Left cardiac atrium (tissue), 4 donors: ENCODE measurements at regions of chr9 and their contacts with region 1.

Region 1: DNA sequence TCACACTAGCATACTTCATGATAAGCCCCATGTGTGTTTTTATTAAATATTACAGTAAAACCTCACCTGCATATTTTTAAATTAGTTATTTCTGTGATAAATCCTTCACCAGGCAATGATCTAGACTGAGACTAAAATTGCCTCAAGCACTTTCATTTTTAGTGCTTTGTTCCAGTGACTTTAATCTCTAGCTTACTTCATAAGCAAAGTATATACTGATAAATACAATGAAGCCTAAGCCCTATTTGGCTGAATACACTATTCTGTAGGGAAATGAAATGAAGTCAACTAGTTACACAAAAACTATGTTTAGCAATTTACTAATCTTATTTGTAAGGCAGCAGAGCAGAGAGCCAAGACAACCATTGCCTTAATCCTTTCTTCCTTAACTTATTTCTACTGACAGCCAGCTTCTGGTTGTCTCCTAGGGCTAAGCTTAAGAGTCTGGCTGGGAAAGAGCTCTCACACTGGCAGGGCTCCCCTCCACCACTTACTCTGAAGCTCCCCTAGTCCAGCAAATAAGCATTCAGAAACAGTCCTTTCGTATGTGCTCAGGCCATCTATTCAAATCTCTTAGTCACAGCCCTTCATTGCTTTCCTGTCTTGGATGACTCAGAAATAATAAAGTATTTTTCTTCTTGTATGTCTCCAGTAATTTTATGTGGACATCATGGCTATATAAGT is 31.4 kb upstream of the MTAP start:
- DNase-seq: no peak
- ATAC-seq: peak; percentile 35 to 41

Region 2: DNA sequence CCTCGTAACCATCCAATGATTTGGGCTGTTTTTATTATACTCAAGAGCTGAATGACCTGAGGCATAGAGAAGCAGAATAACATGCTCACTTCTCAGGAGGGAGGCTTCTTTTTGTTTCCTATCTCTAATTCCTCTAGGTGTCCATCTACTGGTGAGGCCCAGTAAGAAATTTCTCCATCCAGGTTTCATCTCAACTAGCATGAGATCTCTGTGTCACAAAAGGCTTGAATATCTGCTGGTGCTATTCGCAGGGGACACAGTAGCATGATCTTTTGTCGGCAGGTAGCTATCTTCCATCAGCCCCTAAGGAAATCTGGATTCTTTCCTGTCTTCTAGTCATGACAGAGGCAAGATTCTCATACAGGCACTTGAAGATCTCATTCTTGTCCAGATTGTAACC is 297.8 kb before region 1 on chr9:
- intact Hi-C with region 1: loop called in 1 of 2 experiments (anchors 10 kb)
- DNase-seq: no peak
- ATAC-seq: no peak

Region 3: DNA sequence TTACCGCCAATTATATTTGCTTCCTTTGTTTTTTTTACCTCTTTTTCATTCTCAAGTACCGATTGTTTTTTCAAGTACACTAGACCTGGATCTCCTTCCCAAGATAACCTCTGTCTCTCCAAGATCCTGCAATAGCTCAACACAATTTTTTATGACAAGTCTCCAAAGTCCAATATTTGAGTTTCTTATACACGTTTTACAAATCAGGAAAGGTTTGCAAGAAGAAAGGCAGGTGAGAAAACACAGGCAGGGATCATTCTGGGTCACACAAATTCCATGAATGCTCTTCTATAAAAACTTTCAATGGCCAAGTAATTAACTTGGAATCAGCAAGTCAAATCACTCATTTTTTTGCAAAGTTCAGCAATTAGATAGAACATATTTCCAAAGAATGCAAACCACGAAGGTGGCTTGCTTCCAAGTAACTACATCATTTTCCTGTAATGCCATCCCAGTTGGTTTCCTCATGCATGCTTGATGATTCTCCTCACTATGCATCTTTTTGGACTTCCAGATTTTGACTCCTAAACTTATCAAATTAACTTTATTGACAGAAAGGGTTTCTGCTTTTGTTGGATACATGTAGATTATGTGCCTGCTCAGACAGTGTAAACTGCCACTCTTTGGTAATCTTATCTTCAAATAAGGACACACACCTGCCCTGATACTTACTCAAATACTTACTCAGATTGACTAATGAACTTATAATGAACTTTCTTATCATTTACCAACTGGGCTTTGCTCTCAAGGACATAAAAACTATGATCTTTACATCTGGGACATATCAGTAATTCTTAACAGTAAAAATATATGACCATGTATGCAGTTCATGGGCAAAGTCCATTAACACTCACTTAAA is 264.2 kb before region 1 on chr9:
- intact Hi-C with region 1: no loop called
- DNase-seq: no peak
- ATAC-seq: peak in 1 of 2 donors; percentile 62

Region 4: DNA sequence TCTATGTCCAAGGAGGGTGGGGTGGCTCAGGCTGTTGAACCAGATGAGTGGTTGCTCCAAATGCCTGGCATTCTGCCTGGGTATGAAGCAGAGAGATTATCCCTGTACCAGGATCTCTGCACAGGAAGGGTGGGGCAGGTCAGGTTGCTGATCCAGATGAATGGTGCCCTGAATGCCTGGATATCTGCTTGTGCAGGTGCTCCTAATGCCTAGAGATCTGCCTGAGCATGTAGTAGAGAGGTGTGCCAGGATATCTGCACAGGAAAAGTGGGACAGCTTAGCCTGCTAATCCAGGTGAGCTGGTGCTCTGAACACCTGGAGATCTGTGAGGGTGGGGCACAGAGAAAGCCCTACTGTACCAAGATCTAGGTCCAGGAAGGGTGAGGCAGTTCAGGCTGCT is 486.0 kb after region 1 on chr9:
- intact Hi-C with region 1: no loop called
- DNase-seq: no peak
- ATAC-seq: no peak